Common myeloid progenitor, CD34-positive (primary cell): ENCODE measurements at regions of chr15 and their contacts with region 1.

Region 1: DNA sequence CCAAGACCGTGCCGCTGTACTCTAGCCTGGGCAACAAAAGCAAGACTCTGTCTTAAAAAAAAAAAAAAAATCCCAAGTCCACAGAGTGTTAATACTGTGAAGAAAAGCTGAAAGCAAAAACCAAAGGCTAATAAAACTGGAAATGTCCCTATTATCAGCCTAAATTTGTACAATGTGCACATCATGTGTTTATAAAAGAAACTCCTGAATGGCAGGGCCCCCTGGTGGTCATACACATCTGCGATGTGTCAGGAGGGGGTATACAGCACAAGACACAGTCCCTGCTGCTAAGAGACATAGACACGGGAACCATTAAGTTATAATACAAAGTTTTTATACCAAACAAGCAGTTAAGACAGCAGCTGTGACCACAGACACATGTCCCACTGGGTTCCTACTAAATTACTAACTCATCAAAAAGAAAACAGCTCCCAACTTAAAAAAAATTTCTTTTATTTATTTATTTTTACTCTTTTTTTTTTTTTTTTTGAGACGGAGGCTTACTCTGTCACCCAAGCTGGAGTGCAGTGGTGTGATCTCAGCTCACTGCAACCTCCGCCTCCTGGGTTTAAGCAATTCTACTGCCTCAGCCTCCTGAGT is 31.0 kb downstream of the IDH2 start:
- DNase-seq: peak; percentile 87 to 94 (median 93)
- H3K4me3 ChIP-seq: no peak overlapping the region
- H3K27ac ChIP-seq: no peak overlapping the region
- H3K4me1 ChIP-seq: peaks cover 0 to 3% (median 0%) of the 10 kb centered on the region in 4 experiments
- H3K27me3 ChIP-seq: no peaks in the 10 kb centered on the region

Region 2: DNA sequence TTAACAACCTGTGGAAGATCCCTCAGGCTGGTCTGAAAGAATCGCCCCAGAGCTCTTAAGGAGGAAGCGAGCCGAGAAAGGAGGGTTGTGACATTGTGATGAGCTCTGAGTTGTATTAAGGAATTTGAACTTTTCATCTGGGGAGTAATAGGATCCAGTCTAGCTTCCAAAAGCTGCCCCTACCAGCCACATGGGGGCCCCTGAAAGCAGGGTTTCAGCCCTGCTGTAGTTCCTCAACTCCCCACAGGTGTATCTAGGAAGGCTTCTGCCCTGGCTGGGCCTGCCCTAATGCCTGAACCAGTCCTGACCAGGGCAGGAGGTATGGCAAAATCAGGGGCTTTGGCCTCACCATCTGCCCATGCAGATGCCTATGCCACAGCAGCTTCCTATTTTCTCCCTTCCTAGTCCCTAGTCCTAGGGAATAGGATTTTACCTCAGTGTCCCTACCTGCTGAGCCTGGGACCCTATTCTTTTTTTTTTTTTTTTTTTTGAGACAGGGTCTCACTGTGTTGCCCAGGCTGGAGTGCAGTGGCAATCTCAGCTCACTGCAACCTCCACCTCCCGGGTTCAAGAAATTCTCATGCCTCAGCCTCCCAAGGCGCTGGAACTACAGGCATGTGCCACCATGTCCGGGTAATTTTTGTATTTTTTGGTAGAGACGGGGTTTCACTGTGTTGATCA is 172.6 kb before region 1 on chr15:
- CTCF ChIA-PET with region 1: interaction called, 22 read pairs
- POLR2A ChIA-PET with region 1: interaction called, 3 read pairs
- DNase-seq: peak; percentile 67 to 81 (median 79)
- H3K4me3 ChIP-seq: no peak overlapping the region
- H3K27ac ChIP-seq: no peak overlapping the region
- H3K4me1 ChIP-seq: peaks cover 0 to 9% (median 6%) of the 10 kb centered on the region in 4 experiments
- H3K27me3 ChIP-seq: no peaks in the 10 kb centered on the region

Region 3: GRCh38 chr15:89975482-89976245 is 95.6 kb before region 1 on chr15:
- CTCF ChIA-PET with region 1: interaction called, 16 read pairs
- POLR2A ChIA-PET with region 1: no interaction called
- DNase-seq: no peak
- H3K4me3 ChIP-seq: peak overlapping the region in 1 of 7 experiments; percentile 25
- H3K27ac ChIP-seq: no peak overlapping the region
- H3K4me1 ChIP-seq: peaks cover 4 to 50% (median 32%) of the 10 kb centered on the region in 4 experiments
- H3K27me3 ChIP-seq: no peaks in the 10 kb centered on the region

Region 4: GRCh38 chr15:90031231-90031791 is 40.0 kb before region 1 on chr15:
- CTCF ChIA-PET with region 1: interaction called, 20 read pairs
- POLR2A ChIA-PET with region 1: no interaction called
- DNase-seq: peak in 2 of 3 donors; percentile 40 to 50
- H3K4me3 ChIP-seq: no peak overlapping the region
- H3K27ac ChIP-seq: no peak overlapping the region
- H3K4me1 ChIP-seq: peaks cover 18 to 53% (median 44%) of the 10 kb centered on the region in 4 experiments
- H3K27me3 ChIP-seq: no peaks in the 10 kb centered on the region

Region 5: GRCh38 chr15:90086868-90087268 is 15.6 kb after region 1 on chr15:
- CTCF ChIA-PET with region 1: interaction called, 12 read pairs
- POLR2A ChIA-PET with region 1: no interaction called
- DNase-seq: peak; percentile 55 to 73 (median 67)
- H3K4me3 ChIP-seq: no peak overlapping the region
- H3K27ac ChIP-seq: no peak overlapping the region
- H3K4me1 ChIP-seq: peaks cover 0 to 23% (median 10%) of the 10 kb centered on the region in 4 experiments
- H3K27me3 ChIP-seq: no peaks in the 10 kb centered on the region

Region 6: GRCh38 chr15:90101969-90102890 is 30.9 kb after region 1 on chr15 and contains the start of gene IDH2:
- CTCF ChIA-PET with region 1: interaction called, 10 read pairs
- POLR2A ChIA-PET with region 1: no interaction called
- DNase-seq: peak; percentile 66 to 84 (median 79)
- H3K4me3 ChIP-seq: peak within 1 kb of the TSS; percentile 76 to 90 (median 83)
- H3K27ac ChIP-seq: peak within 1 kb of the TSS; percentile 68 to 83
- H3K4me1 ChIP-seq: peaks cover 13 to 50% (median 48%) of the 10 kb centered on the region in 4 experiments
- H3K27me3 ChIP-seq: peaks cover 0 to 2% (median 0%) of the 10 kb centered on the region in 5 experiments

Region 7: DNA sequence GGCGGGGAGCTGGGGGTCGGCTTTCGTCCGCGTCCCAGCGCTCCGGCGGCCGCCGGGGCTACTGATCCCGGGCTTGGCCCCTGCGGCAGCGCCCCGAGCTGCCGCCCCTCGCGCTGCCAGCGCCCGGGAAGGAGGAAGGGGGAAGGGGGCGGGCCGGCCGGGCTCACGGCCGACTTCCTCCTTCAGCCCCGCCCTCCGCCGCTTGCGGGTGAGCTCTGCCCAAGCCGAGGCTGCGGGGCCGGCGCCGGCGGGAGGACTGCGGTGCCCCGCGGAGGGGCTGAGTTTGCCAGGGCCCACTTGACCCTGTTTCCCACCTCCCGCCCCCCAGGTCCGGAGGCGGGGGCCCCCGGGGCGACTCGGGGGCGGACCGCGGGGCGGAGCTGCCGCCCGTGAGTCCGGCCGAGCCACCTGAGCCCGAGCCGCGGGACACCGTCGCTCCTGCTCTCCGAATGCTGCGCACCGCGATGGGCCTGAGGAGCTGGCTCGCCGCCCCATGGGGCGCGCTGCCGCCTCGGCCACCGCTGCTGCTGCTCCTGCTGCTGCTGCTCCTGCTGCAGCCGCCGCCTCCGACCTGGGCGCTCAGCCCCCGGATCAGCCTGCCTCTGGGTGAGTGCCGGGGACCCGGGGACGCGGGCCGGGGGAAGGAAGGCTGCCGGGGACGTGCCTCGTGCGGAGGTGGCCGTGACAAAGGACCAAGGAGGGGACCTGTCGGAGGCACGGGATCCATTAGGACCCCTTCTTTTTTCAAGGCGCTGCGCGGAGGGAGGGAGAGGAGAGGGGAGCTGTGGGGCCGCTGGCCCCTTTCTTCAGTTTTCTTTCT is 130.0 kb after region 1 on chr15 and contains the start of gene SEMA4B:
- CTCF ChIA-PET with region 1: no interaction called
- POLR2A ChIA-PET with region 1: no interaction called
- DNase-seq: peak; percentile 62 to 86 (median 76)
- H3K4me3 ChIP-seq: peak within 1 kb of the TSS; percentile 35 to 89 (median 79)
- H3K27ac ChIP-seq: peak within 1 kb of the TSS in 1 of 2 experiments; percentile 54
- H3K4me1 ChIP-seq: peaks cover 4 to 21% (median 17%) of the 10 kb centered on the region in 4 experiments
- H3K27me3 ChIP-seq: peaks cover 0 to 7% (median 0%) of the 10 kb centered on the region in 5 experiments